Pancreas (tissue), 10 donors: ENCODE measurements at regions of chr6 and their contacts with region 1.

Region 1: DNA sequence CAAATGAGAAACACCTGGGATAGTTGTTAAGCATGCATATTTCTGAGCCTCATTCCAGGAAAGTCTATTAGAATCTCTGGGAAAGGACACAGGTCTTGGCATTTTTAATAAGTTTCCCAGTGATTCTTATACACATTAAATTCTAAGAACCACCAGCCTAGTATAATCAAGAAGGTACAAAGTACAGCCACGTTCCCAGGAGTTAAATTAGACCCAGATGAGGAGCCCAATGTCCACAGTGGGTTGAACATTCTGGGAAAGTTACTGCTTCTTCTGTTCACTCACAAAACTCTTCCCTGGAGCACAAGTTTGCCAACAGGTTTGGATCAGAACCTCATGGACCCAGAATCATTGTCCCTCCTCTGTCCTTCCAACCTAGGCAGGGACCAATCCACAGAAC is 90.4 kb downstream of the RCAN2 start:
- DNase-seq: no peak
- ATAC-seq: no peak
- H3K4me3 ChIP-seq: no peak overlapping the region
- H3K27ac ChIP-seq: no peak overlapping the region
- H3K4me1 ChIP-seq: no peaks in the 10 kb centered on the region
- H3K27me3 ChIP-seq: no peaks in the 10 kb centered on the region
- CTCF ChIP-seq: no peak

Region 2: DNA sequence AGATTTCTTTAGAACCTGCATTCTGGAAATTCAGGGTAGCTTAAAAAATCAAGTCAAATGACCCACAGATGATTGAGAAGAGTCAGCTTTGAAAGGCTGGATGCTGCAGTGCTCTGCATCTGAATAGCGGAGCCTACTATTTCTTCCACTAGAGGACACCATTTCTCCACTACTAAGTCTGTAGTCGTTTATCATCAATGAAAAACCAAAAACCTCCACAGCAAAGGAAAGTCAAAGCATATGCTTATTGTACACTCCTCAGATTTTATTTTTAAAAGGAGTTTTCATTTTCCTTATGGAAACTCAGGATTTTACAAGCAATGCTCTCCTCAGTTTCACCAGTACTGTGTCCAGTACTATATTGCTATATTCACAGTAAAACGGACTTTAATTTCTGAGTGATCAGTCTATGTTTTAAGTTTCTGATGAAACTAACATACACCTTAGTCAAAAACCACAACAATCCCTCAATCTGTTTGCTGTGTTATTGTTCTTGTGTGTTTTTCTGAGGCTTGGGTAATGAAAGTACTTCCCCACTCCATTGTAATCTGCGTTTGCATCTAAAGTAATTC is 179.6 kb before region 1 on chr6:
- intact Hi-C with region 1: loop called in 1 of 3 experiments (anchors 5 kb)
- DNase-seq: no peak
- ATAC-seq: peak; percentile 40 to 95 (median 90)
- H3K4me3 ChIP-seq: no peak overlapping the region
- H3K27ac ChIP-seq: no peak overlapping the region
- H3K4me1 ChIP-seq: no peaks in the 10 kb centered on the region
- H3K27me3 ChIP-seq: no peaks in the 10 kb centered on the region
- CTCF ChIP-seq: peak; percentile 34 to 73 (median 68)

Region 3: GRCh38 chr6:46254331-46254730 is 146.6 kb before region 1 on chr6:
- intact Hi-C with region 1: no loop called
- DNase-seq: no peak
- ATAC-seq: no peak
- H3K4me3 ChIP-seq: no peak overlapping the region
- H3K27ac ChIP-seq: no peak overlapping the region
- H3K4me1 ChIP-seq: no peaks in the 10 kb centered on the region
- H3K27me3 ChIP-seq: no peaks in the 10 kb centered on the region
- CTCF ChIP-seq: no peak